Posterior cingulate gyrus (tissue), 11 donors: ENCODE measurements at regions of chr2 and their contacts with region 1.

Region 1: DNA sequence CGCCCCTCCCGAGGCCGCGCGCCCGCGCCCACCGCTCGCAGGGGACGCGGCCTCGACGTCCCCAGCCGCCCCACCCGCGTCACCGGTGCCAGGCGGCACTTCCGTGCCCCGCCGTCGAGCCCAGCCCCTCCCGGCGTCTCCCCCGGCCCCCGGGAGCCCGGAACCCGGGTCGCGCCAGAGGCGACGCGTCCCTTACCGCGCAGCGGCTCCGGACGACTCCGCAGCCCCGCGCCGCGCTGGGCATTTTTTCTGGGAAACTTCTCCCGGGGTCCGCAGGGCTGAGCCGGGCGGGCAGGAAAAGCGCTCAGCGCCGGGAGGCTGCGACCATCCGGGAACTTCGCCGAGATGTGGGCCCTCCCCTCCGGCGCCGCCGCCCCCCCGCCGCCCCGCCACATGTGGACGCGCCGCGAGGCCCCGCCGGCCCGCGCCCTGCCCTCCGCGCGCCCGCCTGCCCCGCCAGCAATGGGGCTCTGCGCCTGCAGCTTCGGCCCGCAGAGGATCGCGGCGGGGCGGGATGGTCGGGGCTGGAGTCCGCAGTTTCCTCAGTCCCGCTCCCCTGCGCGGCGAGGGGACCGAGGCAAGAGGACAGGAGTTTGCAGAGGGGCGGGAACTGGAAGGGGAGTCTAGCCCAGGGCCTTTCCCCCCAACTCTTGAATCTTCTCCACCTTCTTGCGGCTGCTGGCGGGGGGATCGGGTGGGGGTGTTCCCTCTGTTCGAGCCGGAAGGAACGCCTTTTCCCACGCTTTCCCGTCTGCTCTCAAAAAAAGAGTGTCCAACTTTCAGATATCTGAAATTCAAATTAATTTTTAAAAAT is 81.5 kb downstream of the CHRNA1 start:
- DNase-seq: peak; percentile 40 to 93 (median 66)

Region 2: DNA sequence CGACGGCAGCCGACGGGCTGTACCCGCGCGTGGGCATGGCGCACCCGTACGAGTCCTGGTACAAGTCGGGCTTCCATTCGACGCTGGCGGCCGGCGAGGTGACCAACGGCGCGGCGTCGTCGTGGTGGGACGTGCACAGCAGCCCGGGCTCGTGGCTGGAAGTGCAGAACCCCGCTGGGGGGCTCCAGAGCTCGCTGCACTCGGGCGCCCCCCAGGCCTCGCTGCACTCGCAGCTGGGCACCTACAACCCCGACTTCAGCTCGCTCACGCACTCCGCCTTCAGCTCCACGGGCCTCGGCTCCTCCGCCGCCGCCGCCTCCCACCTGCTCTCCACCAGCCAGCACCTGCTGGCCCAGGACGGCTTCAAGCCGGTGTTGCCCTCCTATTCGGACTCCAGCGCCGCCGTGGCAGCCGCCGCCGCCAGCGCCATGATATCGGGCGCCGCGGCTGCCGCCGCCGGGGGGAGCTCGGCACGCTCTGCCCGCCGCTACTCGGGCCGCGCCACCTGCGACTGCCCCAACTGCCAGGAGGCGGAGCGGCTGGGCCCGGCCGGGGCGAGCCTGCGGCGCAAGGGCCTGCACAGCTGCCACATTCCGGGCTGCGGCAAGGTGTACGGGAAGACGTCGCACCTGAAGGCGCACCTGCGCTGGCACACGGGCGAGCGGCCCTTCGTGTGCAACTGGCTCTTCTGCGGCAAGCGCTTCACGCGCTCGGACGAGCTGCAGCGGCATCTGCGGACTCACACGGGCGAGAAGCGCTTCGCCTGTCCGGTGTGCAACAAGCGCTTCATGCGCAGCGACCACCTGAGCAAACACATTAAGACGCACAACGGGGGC is 346.1 kb before region 1 on chr2:
- intact Hi-C with region 1: no loop called
- DNase-seq: peak in 1 of 10 donors; percentile 80

Region 3: DNA sequence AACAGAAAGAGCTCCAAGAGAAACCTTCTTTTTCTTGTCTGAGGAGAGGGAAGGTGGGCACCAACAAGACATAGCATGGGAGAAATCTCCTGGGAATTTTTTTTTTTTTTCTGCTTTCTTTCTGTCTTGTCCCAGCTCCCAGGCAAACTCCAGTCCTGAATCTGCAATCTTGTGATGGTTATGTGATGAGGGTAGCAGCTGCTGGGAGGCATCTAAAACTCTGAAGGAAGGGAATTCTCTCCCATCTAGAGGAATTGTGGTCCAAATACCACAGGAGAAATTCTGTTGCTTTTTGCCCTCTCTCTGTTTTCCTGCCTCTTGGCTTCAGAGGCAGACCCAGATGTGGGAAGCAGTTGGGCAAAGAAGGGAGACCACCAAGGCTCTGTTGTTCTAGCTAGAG is 270.5 kb before region 1 on chr2:
- intact Hi-C with region 1: no loop called
- DNase-seq: no peak

Region 4: GRCh38 chr2:174606336-174606735 is 76.4 kb before region 1 on chr2:
- intact Hi-C with region 1: loop called (anchors 5 kb)
- DNase-seq: no peak